HepG2 (cell line): ENCODE measurements at regions of chr3 and their contacts with region 1.

Region 1: DNA sequence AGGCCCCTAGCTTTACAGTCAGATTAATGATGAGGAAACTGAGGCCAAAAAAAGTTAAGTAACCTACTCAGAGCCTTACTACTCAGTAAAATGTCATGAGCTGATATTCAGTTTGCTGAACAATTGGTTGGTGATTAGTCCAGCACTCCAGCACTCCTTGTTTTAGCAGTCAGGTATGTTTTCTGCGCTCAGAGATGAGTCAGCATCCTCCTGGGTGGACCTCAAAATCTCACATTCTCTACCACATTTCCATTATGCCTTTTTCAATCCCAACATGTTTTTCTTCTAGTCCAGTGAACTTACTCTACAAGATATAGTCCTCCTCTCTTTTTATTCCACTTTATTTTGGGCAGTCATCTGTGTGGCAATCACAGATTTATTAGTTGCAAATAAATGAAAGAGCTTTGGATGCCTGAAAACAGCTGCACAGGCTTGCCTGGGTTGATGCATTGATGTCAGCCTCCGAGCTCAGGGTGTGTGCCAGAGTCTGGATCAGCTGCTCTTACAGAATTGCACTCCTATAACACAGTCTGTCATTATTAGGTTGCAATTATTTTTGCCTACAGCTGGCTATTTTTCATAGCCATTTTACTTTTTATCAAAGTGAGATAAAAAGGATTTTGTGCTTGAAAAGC is 133.2 kb downstream of the ARPP21 start:
- DNase-seq: no peak
- ATAC-seq: no peak
- H3K4me3 ChIP-seq: no peak overlapping the region
- H3K27ac ChIP-seq: no peak overlapping the region
- H3K4me1 ChIP-seq: no peaks in the 10 kb centered on the region
- H3K27me3 ChIP-seq: no peaks in the 10 kb centered on the region
- CTCF ChIP-seq: no peak
- EP300 ChIP-seq: no peak
- POLR2A ChIP-seq: no peak
- RAD21 ChIP-seq: no peak

Region 2: GRCh38 chr3:35733341-35733740 is 39.2 kb before region 1 on chr3:
- CTCF ChIA-PET with region 1: no interaction called
- POLR2A ChIA-PET with region 1: no interaction called
- in situ Hi-C with region 1: no loop called
- intact Hi-C with region 1: loop called (anchors 1 kb)
- DNase-seq: no peak
- ATAC-seq: no peak
- H3K4me3 ChIP-seq: no peak overlapping the region
- H3K27ac ChIP-seq: no peak overlapping the region
- H3K4me1 ChIP-seq: no peaks in the 10 kb centered on the region
- H3K27me3 ChIP-seq: no peaks in the 10 kb centered on the region
- CTCF ChIP-seq: no peak
- EP300 ChIP-seq: no peak
- POLR2A ChIP-seq: no peak
- RAD21 ChIP-seq: no peak